HepG2 (cell line): ENCODE measurements at regions of chr2 and their contacts with region 1.

Region 1: GRCh38 chr2:181953881-181954537 is 31.6 kb upstream of the PPP1R1C start:
- DNase-seq: peak; percentile 70
- ATAC-seq: peak; percentile 92
- H3K4me3 ChIP-seq: peak overlapping the region; percentile 52 to 58 (median 53)
- H3K27ac ChIP-seq: peak overlapping the region; percentile 16
- H3K4me1 ChIP-seq: peaks cover 40% of the 10 kb centered on the region
- H3K27me3 ChIP-seq: no peaks in the 10 kb centered on the region; a peak in 1 of 5 replicates
- CTCF ChIP-seq: peak; percentile 81
- EP300 ChIP-seq: no peak
- POLR2A ChIP-seq: no peak
- RAD21 ChIP-seq: no peak

Region 2: DNA sequence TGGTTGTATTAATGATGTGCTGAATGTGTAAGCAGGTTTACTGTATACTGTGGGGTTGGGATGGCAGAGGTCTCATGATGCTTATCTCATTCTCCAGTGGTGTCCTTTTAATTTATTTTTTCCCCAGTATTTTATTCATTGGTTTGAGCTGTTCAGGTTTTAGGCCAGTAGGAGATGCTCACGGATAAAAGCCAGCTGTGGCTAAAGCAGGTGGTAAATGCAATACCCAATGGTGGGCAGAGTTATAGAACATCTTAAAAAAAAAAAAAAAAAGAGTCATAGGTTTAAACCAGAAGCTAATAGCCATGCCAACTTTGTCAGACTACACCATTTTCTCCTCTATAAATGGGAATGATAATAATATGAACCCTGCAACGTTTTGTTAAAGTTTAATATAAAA is 215.9 kb before region 1 on chr2:
- CTCF ChIA-PET with region 1: interaction called, 19 read pairs
- POLR2A ChIA-PET with region 1: no interaction called
- in situ Hi-C with region 1: no loop called
- intact Hi-C with region 1: loop called (anchors 1 kb)
- DNase-seq: no peak
- ATAC-seq: peak; percentile 83
- H3K4me3 ChIP-seq: no peak overlapping the region
- H3K27ac ChIP-seq: no peak overlapping the region
- H3K4me1 ChIP-seq: peaks cover 6% of the 10 kb centered on the region
- H3K27me3 ChIP-seq: no peaks in the 10 kb centered on the region
- CTCF ChIP-seq: peak; percentile 44
- EP300 ChIP-seq: no peak
- POLR2A ChIP-seq: no peak
- RAD21 ChIP-seq: no peak

Region 3: GRCh38 chr2:181742922-181743722 is 210.9 kb before region 1 on chr2:
- CTCF ChIA-PET with region 1: interaction called, 19 read pairs
- POLR2A ChIA-PET with region 1: no interaction called
- in situ Hi-C with region 1: no loop called
- intact Hi-C with region 1: loop called (anchors 1 kb)
- DNase-seq: peak; percentile 66
- ATAC-seq: peak; percentile 68; the same call in 2 of the 3 replicates
- H3K4me3 ChIP-seq: no peak overlapping the region
- H3K27ac ChIP-seq: no peak overlapping the region
- H3K4me1 ChIP-seq: peaks cover 10% of the 10 kb centered on the region
- H3K27me3 ChIP-seq: no peaks in the 10 kb centered on the region
- CTCF ChIP-seq: peak; percentile 82
- EP300 ChIP-seq: peak in 1 of 2 experiments; percentile 25; a peak in 1 of 4 replicates
- POLR2A ChIP-seq: no peak
- RAD21 ChIP-seq: peak; percentile 73

Region 4: DNA sequence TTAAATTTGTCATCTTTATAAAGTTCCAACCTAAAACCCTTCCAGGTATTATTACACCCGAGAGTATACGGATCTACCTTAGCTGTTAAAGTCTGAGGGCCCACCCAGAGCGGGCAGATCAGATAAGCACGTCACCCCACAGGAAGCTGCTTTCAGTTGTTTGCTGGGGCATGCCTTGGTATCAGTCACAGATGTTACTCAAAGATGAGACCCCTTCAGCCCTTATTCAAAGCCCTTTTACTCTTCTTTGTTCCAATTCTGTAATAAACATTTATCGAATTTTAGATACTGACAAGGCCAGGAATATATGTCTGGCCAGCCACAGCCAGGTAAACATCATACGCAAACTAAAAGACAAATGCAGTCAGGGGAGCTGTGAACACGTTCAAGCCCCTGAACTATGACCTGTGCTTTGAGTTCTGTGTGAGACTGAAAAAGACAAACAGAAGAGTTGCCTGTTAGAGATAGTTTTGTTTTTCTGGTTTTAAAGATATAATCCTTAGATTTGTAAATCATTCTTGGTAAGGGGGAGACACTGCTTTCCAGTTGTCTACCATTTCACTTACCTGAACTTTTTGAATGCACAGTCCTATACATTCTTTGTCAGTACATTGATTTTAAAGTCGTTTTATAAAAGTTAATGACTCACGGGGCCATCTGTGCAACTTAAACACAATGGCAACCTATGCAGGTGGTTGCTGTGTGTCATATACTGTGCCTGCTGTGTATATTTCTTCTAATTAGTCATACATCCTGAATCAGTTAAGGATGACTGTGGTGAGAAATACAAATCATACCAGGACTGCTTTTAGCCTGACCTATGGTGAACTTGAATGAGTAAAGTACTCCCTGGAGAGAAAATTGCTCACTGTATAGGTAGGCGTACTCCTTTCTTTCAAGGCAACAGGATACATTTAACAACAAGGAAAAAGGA is 163.0 kb before region 1 on chr2:
- CTCF ChIA-PET with region 1: no interaction called
- POLR2A ChIA-PET with region 1: no interaction called
- in situ Hi-C with region 1: no loop called
- intact Hi-C with region 1: loop called (anchors 5 kb)
- DNase-seq: peak; percentile 88
- ATAC-seq: peak; percentile 96
- H3K4me3 ChIP-seq: peak overlapping the region; percentile 11 to 53 (median 31)
- H3K27ac ChIP-seq: peak overlapping the region; percentile 82
- H3K4me1 ChIP-seq: peaks cover 43% of the 10 kb centered on the region
- H3K27me3 ChIP-seq: no peaks in the 10 kb centered on the region
- CTCF ChIP-seq: no peak
- EP300 ChIP-seq: peak in 1 of 2 experiments; percentile 71; a peak in 2 of 4 replicates
- POLR2A ChIP-seq: no peak; a peak in 1 of 4 replicates
- RAD21 ChIP-seq: 0 out of 2 replicates have a peak, but pooled peaks have one; percentile 21

Region 5: DNA sequence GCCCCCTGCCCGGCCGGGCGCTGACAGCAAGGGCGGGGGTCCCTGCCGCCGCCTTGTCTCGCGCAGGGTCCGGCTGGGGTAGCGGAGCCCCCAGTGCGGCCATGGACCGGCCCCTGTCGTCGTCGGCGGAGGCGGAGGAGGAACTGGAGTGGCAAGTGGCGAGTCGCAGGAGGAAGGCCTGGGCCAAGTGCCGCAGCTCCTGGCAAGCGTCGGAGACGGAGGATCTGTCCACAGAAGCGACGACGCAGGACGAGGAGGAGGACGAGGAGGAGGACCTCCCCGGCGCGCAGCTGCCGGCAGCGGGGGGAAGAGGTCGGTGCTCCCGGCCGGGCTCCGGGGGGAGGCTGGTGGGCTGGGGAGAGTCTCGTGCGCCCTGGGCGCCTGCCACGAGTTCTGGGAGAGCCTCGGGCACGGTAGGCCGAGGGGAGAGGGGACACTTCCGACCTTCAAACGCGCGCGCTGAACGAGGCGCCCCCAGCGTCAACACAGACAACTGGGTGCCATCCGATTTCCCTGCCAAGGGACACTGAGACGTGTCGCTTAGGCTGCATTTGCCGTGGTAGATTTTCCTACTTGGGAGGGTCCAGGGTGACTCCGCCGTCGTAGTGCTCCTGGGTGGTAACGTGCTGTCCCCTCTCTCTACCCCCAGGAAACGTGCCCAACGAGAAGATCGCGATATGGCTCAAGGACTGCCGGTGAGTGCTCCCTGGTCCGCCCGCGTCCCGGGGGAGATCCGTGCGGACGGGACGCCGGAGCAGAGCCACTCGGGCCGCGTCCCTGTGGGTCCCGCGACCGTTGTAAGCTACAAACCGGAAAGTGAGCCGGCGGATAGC is 61.8 kb before region 1 on chr2:
- CTCF ChIA-PET with region 1: no interaction called
- POLR2A ChIA-PET with region 1: no interaction called
- in situ Hi-C with region 1: no loop called
- intact Hi-C with region 1: loop called (anchors 2 kb)
- DNase-seq: peak; percentile 72
- ATAC-seq: peak; percentile 87
- H3K4me3 ChIP-seq: peak overlapping the region; percentile 79 to 96 (median 80)
- H3K27ac ChIP-seq: peak overlapping the region; percentile 96
- H3K4me1 ChIP-seq: peaks cover 59% of the 10 kb centered on the region
- H3K27me3 ChIP-seq: no peaks in the 10 kb centered on the region
- CTCF ChIP-seq: peak; percentile 63
- EP300 ChIP-seq: no peak
- POLR2A ChIP-seq: peak; percentile 66 to 91
- RAD21 ChIP-seq: peak; percentile 35; the same call in 1 of the 2 replicates

Region 6: GRCh38 chr2:181910028-181910831 is 43.8 kb before region 1 on chr2:
- CTCF ChIA-PET with region 1: no interaction called
- POLR2A ChIA-PET with region 1: no interaction called
- in situ Hi-C with region 1: loop called (anchors 5 kb)
- intact Hi-C with region 1: no loop called
- DNase-seq: no peak
- ATAC-seq: peak; percentile 49
- H3K4me3 ChIP-seq: no peak overlapping the region
- H3K27ac ChIP-seq: peak overlapping the region; percentile 34
- H3K4me1 ChIP-seq: peaks cover 60% of the 10 kb centered on the region
- H3K27me3 ChIP-seq: no peaks in the 10 kb centered on the region
- CTCF ChIP-seq: no peak
- EP300 ChIP-seq: no peak
- POLR2A ChIP-seq: no peak
- RAD21 ChIP-seq: no peak

Region 7: DNA sequence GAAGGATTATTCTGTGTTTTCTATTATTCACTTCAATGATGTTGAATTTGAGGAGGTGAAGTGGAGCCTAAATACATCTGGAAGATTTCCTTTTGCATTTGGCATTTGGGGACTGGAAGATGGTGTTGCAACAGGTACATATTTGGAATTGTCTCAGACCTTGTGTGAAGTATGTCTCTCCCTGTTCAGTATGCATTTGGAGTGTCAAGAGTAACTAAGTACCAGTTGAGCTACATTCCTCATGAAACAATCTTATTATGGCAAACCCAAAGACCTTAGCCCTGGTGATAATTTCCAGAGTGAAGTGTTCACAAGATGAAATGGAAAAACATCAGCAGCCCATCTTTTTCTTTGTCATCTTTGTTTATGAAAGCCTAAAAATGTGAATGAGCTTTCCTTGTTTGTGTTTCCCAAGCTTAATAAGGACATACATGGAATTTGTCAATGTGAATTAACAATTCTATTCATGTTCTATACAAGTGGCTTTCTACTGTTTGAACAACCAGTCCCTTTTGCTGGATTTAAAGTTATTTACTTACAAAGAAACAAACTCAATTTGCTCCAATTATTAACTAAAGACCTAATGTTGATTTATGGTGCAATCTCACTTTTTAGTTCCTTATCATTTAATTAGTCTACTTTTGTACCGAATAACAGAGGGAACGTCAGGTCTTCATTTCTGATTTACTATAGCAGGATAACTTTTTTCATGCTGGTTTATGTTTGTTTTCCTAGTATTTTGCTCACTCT is 10.5 kb before region 1 on chr2:
- CTCF ChIA-PET with region 1: no interaction called
- POLR2A ChIA-PET with region 1: no interaction called
- in situ Hi-C with region 1: no loop called
- intact Hi-C with region 1: loop called (anchors 1 kb)
- DNase-seq: no peak
- ATAC-seq: no peak
- H3K4me3 ChIP-seq: peak overlapping the region in 2 of 3 experiments; percentile 25 to 26; a peak in 3 of 6 replicates
- H3K27ac ChIP-seq: peak overlapping the region; percentile 66
- H3K4me1 ChIP-seq: peaks cover 45% of the 10 kb centered on the region
- H3K27me3 ChIP-seq: no peaks in the 10 kb centered on the region
- CTCF ChIP-seq: no peak
- EP300 ChIP-seq: 0 out of 4 replicates have a peak, but pooled peaks of 1 of the 2 experiments have one; percentile 2
- POLR2A ChIP-seq: no peak
- RAD21 ChIP-seq: no peak